K562 (cell line): ENCODE measurements at regions of chr16 and their contacts with region 1.

Region 1: GRCh38 chr16:24516900-24517669 is 22.3 kb upstream of the RBBP6 start:
- DNase-seq: peak; percentile 68 to 89 (median 76)
- ATAC-seq: peak; percentile 95
- H3K4me3 ChIP-seq: no peak overlapping the region
- H3K27ac ChIP-seq: no peak overlapping the region
- H3K4me1 ChIP-seq: no peaks in the 10 kb centered on the region
- H3K27me3 ChIP-seq: peaks cover 0 to 32% of the 10 kb centered on the region in 2 experiments; a peak in 2 of 5 replicates
- CTCF ChIP-seq: peak; percentile 91 to 99 (median 99)
- EP300 ChIP-seq: peak; percentile 18; the same call in 1 of the 2 replicates
- POLR2A ChIP-seq: no peak
- RAD21 ChIP-seq: peak; percentile 85 to 87

Region 2: GRCh38 chr16:24689145-24689544 is 172.1 kb after region 1 on chr16:
- CTCF ChIA-PET with region 1: interaction called, 7 read pairs
- POLR2A ChIA-PET with region 1: no interaction called
- in situ Hi-C with region 1: no loop called
- intact Hi-C with region 1: loop called (anchors 1 kb)
- DNase-seq: peak in 3 of 4 experiments; percentile 24 to 52 (median 42)
- ATAC-seq: peak; percentile 81
- H3K4me3 ChIP-seq: no peak overlapping the region
- H3K27ac ChIP-seq: no peak overlapping the region
- H3K4me1 ChIP-seq: no peaks in the 10 kb centered on the region; a peak in 1 of 5 replicates
- H3K27me3 ChIP-seq: peaks cover 2 to 6% of the 10 kb centered on the region in 2 experiments; a peak in 2 of 5 replicates
- CTCF ChIP-seq: peak; percentile 64 to 73 (median 68)
- EP300 ChIP-seq: no peak
- POLR2A ChIP-seq: no peak
- RAD21 ChIP-seq: peak; percentile 29 to 69

Region 3: GRCh38 chr16:24800586-24800985 is 283.5 kb after region 1 on chr16:
- CTCF ChIA-PET with region 1: interaction called, 3 read pairs
- POLR2A ChIA-PET with region 1: interaction called, 3 read pairs
- in situ Hi-C with region 1: no loop called
- intact Hi-C with region 1: loop called (anchors 2 kb)
- DNase-seq: peak in 2 of 4 experiments; percentile 14 to 21
- ATAC-seq: peak; percentile 54; the same call in 1 of the 3 replicates
- H3K4me3 ChIP-seq: no peak overlapping the region
- H3K27ac ChIP-seq: no peak overlapping the region
- H3K4me1 ChIP-seq: no peaks in the 10 kb centered on the region
- H3K27me3 ChIP-seq: no peaks in the 10 kb centered on the region
- CTCF ChIP-seq: peak; percentile 35 to 49 (median 41); a peak in 5 of 6 replicates
- EP300 ChIP-seq: no peak
- POLR2A ChIP-seq: no peak
- RAD21 ChIP-seq: peak in 1 of 2 experiments; percentile 47; a peak in 2 of 4 replicates

Region 4: GRCh38 chr16:25224731-25225319 is 707.7 kb after region 1 on chr16:
- CTCF ChIA-PET with region 1: no interaction called
- POLR2A ChIA-PET with region 1: no interaction called
- in situ Hi-C with region 1: no loop called
- intact Hi-C with region 1: loop called (anchors 2 kb)
- DNase-seq: no peak
- ATAC-seq: no peak
- H3K4me3 ChIP-seq: no peak overlapping the region
- H3K27ac ChIP-seq: no peak overlapping the region
- H3K4me1 ChIP-seq: peaks cover 3 to 4% of the 10 kb centered on the region in 2 experiments; a peak in 4 of 5 replicates
- H3K27me3 ChIP-seq: no peaks in the 10 kb centered on the region; a peak in 1 of 5 replicates
- CTCF ChIP-seq: no peak
- EP300 ChIP-seq: no peak
- POLR2A ChIP-seq: no peak
- RAD21 ChIP-seq: no peak